H1 (cell line): ENCODE measurements at regions of chr22 and their contacts with region 1.

Region 1: DNA sequence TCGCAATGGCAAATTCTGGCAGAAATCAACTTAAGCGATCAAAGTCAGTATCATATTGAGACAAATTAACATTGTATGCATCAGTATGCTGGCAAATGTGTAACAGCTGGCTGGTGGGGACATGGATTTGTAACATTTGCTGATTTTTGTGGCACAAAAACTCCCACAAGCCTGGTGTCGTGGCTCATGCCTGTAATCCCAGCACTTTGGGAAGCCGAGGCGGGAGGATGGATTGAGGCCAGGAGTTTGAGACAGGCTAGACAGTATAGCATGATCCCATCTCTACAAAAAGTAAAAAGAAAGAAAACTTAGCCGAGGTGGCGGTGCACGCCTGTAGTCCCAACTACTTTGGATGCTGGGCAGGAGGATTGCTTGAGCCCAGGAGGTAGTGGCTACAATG is 17.6 kb upstream of the HDHD5 start:
- DNase-seq: no peak
- H3K4me3 ChIP-seq: no peak overlapping the region
- H3K27ac ChIP-seq: no peak overlapping the region
- H3K4me1 ChIP-seq: peaks cover 0 to 11% (median 5%) of the 10 kb centered on the region in 4 experiments; a peak in 5 of 7 replicates
- H3K27me3 ChIP-seq: no peaks in the 10 kb centered on the region
- CTCF ChIP-seq: no peak
- EP300 ChIP-seq: no peak
- POLR2A ChIP-seq: no peak
- RAD21 ChIP-seq: no peak

Region 2: GRCh38 chr22:17191163-17191784 is 14.6 kb after region 1 on chr22:
- CTCF ChIA-PET with region 1: interaction called, 30 read pairs
- POLR2A ChIA-PET with region 1: interaction called, 42 read pairs
- DNase-seq: no peak
- H3K4me3 ChIP-seq: no peak overlapping the region
- H3K27ac ChIP-seq: no peak overlapping the region
- H3K4me1 ChIP-seq: peaks cover 0 to 9% (median 7%) of the 10 kb centered on the region in 4 experiments; a peak in 5 of 7 replicates
- H3K27me3 ChIP-seq: no peaks in the 10 kb centered on the region
- CTCF ChIP-seq: no peak
- EP300 ChIP-seq: no peak
- POLR2A ChIP-seq: no peak
- RAD21 ChIP-seq: no peak